Astrocyte of the cerebellum (primary cell): ENCODE measurements at regions of chr17 and their contacts with region 1.

Region 1: DNA sequence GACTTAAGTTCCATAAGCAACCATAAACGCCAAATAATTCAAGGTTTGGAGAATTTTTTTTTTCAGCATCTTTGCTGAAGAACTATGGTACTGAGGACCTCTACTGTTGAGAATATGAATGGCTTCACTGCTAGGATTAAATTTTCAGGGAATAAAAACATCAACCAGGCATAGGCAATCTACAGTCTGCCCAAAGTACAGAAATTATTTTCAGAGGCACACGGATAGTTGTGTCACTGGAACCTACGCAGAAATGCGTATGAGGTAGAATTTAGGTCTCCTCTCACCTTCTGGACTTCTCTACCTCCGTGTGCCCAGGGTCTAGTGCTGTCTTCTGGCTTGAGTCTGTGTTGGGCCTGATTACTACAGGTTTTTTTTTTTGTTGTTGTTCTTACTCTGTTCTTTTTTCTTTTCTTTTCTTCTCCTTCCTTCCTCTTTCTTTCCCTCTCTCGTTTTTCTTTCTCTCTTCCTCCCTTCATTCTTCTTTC is 39.7 kb downstream of the NACA2 start:
- DNase-seq: peak; percentile 48
- H3K4me3 ChIP-seq: no peak overlapping the region
- CTCF ChIP-seq: peak; percentile 50

Region 2: DNA sequence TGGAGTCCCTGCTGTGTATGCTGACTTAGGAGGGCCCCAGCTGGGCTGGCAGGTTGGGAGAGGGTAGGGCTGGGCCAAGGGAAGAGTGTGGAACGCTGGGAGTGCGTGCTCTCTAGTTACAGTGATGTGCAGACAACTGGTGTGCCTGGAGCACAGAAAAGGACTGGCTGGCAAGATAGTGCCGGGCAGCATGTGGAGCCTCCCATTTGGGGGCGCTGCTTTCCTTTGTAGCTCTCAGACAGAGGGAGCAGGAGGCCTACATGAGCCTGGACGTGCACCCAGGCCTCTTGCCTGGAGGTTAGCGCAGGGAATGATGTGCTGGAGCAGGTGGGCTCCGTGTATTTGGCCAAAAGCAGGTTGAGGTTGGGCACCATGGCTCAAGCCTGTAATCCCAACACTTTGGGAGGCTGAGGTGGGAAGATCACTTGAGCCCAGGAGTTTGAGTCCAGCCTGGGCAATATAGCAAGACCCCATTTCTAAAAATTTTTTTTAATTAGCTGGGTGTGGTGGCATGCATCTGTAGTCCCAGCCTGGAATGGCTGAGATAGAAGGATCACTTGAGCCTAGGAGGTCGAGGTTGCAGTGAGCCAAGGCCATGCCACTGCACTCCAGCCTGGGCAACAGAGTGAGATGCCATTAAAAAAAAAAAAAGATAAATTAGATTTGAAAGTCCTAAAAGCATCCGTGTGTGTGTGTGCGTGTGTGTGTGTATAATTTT is 125.1 kb before region 1 on chr17:
- in situ Hi-C with region 1: loop called (anchors 10 kb)
- DNase-seq: no peak
- H3K4me3 ChIP-seq: no peak overlapping the region
- CTCF ChIP-seq: no peak